HepG2 (cell line): ENCODE measurements at regions of chr3 and their contacts with region 1.

Region 1: DNA sequence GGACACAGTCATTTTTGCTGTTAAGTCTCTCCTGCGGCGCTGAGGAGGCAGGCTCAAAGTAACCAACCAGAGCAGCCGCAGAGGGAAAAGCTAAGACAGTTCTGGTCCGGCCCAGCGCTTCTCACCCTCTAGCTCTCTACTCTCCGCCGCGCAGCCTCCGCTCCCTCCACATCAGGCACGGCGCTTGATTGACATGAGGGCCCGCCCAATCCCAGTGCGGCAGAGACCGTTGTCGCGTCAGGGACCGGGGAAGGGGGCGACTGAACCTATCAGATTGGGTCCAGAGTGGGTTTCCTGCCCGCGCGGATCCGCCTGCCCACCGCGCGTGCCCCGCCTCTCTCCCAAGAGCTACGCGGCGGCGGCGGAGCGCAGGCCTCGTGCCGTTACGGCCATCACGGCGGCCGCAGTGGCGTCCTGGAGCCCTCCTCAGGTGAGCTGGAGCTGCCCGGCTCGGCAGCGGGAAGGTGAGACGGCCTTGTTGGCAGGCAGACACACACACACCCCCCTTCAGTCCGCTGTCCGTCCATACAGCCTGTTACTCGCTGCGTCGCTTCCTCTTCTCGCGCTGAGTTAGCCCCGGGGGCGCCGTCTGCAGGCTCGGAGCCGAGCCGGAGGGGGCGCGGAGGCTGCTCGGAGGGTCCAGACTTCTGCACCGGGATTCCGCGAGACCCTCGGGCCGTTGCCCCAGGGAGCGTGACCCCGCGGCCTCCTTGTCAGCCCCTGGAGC is at the start of gene NCK1:
- DNase-seq: peak; percentile 95
- ATAC-seq: peak; percentile 97
- H3K4me3 ChIP-seq: peak within 1 kb of the TSS; percentile 79 to 88 (median 87)
- H3K27ac ChIP-seq: peak within 1 kb of the TSS; percentile 90
- H3K4me1 ChIP-seq: peaks cover 29% of the 10 kb centered on the region
- H3K27me3 ChIP-seq: no peaks in the 10 kb centered on the region; a peak in 1 of 5 replicates
- CTCF ChIP-seq: peak; percentile 52
- EP300 ChIP-seq: no peak
- POLR2A ChIP-seq: peak; percentile 91 to 97
- RAD21 ChIP-seq: no peak
- total RNA-seq, gene NCK1: 30.4 and 51.0 TPM in 2 replicates

Region 2: GRCh38 chr3:136690599-136690998 is 171.5 kb before region 1 on chr3:
- CTCF ChIA-PET with region 1: no interaction called
- POLR2A ChIA-PET with region 1: no interaction called
- in situ Hi-C with region 1: no loop called
- intact Hi-C with region 1: no loop called
- DNase-seq: no peak
- ATAC-seq: no peak
- H3K4me3 ChIP-seq: no peak overlapping the region
- H3K27ac ChIP-seq: no peak overlapping the region
- H3K4me1 ChIP-seq: peaks cover 43% of the 10 kb centered on the region
- H3K27me3 ChIP-seq: no peaks in the 10 kb centered on the region
- CTCF ChIP-seq: no peak
- EP300 ChIP-seq: no peak
- POLR2A ChIP-seq: no peak
- RAD21 ChIP-seq: no peak

Region 3: DNA sequence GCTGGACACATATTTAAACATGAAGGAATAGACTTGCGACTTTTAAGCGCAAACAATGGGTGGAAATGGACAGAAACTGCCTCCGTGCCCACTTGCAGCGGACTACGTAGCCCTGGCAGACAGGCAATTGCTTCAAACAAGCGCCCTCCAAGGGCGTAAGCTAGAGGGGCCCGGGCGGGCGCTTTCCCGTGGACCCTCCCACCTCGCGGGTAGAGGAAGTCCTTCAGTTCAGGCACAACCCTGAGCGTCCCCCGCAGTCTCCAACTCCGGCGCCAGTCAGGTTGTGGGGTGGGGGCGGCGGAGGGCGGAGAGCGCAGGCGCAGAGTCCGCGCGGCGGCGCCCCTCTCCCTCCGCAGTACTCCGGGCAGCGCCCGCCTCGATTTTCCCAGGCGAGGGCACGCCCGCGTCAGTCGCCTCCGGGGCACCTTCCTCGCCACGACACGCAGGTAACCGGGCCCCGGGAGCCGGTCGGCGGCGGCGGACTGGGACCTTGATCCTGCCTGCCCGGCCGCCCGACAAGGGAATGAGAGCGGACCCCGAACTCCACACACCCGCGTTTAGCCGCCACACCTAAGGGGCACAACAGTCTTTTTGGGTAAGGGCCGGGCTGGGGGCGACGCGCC is 43.2 kb before region 1 on chr3 and contains the start of gene SLC35G2:
- CTCF ChIA-PET with region 1: no interaction called
- POLR2A ChIA-PET with region 1: interaction called, 7 read pairs
- in situ Hi-C with region 1: no loop called
- intact Hi-C with region 1: loop called (anchors 1 kb)
- DNase-seq: peak; percentile 55
- ATAC-seq: peak; percentile 83
- H3K4me3 ChIP-seq: peak within 1 kb of the TSS; percentile 72 to 81 (median 77)
- H3K27ac ChIP-seq: peak within 1 kb of the TSS; percentile 71
- H3K4me1 ChIP-seq: peaks cover 31% of the 10 kb centered on the region
- H3K27me3 ChIP-seq: no peaks in the 10 kb centered on the region
- CTCF ChIP-seq: peak; percentile 39
- EP300 ChIP-seq: no peak
- POLR2A ChIP-seq: peak in 1 of 2 experiments; percentile 57; a peak in 2 of 4 replicates
- RAD21 ChIP-seq: no peak
- total RNA-seq, gene SLC35G2: 4.2 and 7.6 TPM in 2 replicates

Region 4: DNA sequence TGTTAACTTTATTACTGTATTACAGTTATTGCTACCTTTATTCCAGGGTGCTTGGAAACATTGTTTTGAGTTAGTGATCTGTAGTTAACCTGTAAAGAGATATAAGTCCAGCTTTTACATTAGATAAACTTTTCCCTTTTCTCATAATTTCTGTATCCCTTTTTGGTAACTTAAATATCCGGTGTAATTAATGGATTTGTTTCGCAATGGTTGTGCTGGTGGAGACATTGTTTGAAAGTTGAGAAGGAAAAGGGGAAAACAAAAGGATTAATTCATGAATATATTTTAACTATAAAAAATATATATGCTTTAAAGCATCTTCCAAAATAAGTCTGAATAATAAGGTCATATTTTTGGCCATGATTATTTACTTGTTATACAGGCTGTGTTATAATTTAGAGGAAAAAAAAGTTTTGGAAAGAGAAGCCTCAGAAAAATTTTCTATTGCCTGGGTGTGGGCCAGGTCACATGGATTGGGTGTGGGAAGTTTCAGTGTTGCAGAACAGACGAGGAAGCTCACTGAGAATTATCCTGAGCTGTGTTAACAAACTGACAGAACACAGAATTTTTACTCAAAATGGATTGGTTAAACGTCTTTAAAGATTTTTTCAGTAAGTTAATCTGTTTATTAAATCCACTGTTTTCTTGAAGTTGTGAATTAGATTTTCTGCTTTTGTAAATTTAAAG is 68.1 kb after region 1 on chr3:
- CTCF ChIA-PET with region 1: no interaction called
- POLR2A ChIA-PET with region 1: no interaction called
- in situ Hi-C with region 1: no loop called
- intact Hi-C with region 1: no loop called
- DNase-seq: no peak
- ATAC-seq: no peak
- H3K4me3 ChIP-seq: no peak overlapping the region
- H3K27ac ChIP-seq: no peak overlapping the region
- H3K4me1 ChIP-seq: no peaks in the 10 kb centered on the region
- H3K27me3 ChIP-seq: no peaks in the 10 kb centered on the region
- CTCF ChIP-seq: no peak
- EP300 ChIP-seq: no peak
- POLR2A ChIP-seq: no peak
- RAD21 ChIP-seq: no peak

Region 5: GRCh38 chr3:136949708-136950107 is 87.7 kb after region 1 on chr3:
- CTCF ChIA-PET with region 1: no interaction called
- POLR2A ChIA-PET with region 1: interaction called, 4 read pairs
- in situ Hi-C with region 1: no loop called
- intact Hi-C with region 1: loop called (anchors 5 kb)
- DNase-seq: no peak
- ATAC-seq: no peak
- H3K4me3 ChIP-seq: no peak overlapping the region
- H3K27ac ChIP-seq: no peak overlapping the region
- H3K4me1 ChIP-seq: peaks cover 25% of the 10 kb centered on the region
- H3K27me3 ChIP-seq: no peaks in the 10 kb centered on the region; a peak in 1 of 5 replicates
- CTCF ChIP-seq: no peak
- EP300 ChIP-seq: no peak
- POLR2A ChIP-seq: no peak
- RAD21 ChIP-seq: no peak

Region 6: GRCh38 chr3:136955813-136956212 is 93.8 kb after region 1 on chr3:
- CTCF ChIA-PET with region 1: no interaction called
- POLR2A ChIA-PET with region 1: interaction called, 18 read pairs
- in situ Hi-C with region 1: no loop called
- intact Hi-C with region 1: loop called (anchors 5 kb)
- DNase-seq: peak; percentile 81
- ATAC-seq: peak; percentile 92
- H3K4me3 ChIP-seq: peak overlapping the region in 1 of 3 experiments; percentile 7; a peak in 1 of 6 replicates
- H3K27ac ChIP-seq: peak overlapping the region; percentile 41
- H3K4me1 ChIP-seq: peaks cover 38% of the 10 kb centered on the region
- H3K27me3 ChIP-seq: no peaks in the 10 kb centered on the region
- CTCF ChIP-seq: no peak
- EP300 ChIP-seq: peak in 1 of 2 experiments; percentile 43; a peak in 1 of 4 replicates
- POLR2A ChIP-seq: no peak
- RAD21 ChIP-seq: no peak

Region 7: DNA sequence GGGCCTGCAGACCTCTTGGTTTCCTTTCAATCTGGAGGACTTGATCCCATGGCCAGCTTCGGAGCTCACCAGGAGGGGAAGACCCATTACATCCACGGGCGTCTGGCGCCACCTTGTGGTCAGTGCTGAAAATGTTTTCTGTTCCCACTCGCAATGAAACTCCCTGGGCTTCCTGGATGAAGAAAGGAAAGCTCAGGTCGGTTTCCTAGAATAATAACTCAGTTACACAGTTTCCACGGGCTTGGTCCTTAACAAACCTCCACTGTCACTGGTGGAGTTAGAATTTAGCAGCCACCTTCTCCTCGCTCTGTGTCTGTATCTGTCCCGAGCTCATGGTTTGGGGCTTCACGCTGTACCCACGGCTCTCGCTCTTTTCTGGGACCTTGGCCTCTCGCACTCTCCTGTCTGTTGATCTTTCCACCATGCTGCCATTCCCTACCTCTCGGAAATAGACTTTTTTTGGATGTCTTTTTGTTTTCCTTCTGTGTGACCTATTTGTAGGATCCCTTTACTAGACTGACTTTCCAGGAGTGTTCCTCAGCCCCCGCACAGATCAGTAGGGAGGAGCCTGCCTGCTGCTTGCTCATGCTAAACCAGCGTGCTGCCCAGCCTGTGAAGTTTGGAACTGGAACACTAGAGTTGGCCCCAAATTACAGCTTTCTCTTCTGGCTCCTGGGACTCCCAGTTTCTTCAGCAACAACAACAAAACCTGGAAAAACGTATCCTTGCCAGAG is 152.1 kb after region 1 on chr3:
- CTCF ChIA-PET with region 1: no interaction called
- POLR2A ChIA-PET with region 1: interaction called, 11 read pairs
- in situ Hi-C with region 1: no loop called
- intact Hi-C with region 1: loop called (anchors 2 kb)
- DNase-seq: peak; percentile 82
- ATAC-seq: peak; percentile 94
- H3K4me3 ChIP-seq: peak overlapping the region; percentile 54 to 86 (median 73)
- H3K27ac ChIP-seq: peak overlapping the region; percentile 63
- H3K4me1 ChIP-seq: peaks cover 16% of the 10 kb centered on the region
- H3K27me3 ChIP-seq: no peaks in the 10 kb centered on the region; a peak in 1 of 5 replicates
- CTCF ChIP-seq: peak; percentile 94
- EP300 ChIP-seq: no peak
- POLR2A ChIP-seq: no peak; a peak in 1 of 4 replicates
- RAD21 ChIP-seq: peak; percentile 94

Region 8: GRCh38 chr3:137409584-137409983 is 547.5 kb after region 1 on chr3:
- CTCF ChIA-PET with region 1: no interaction called
- POLR2A ChIA-PET with region 1: no interaction called
- in situ Hi-C with region 1: no loop called
- intact Hi-C with region 1: no loop called
- DNase-seq: no peak
- ATAC-seq: no peak
- H3K4me3 ChIP-seq: no peak overlapping the region
- H3K27ac ChIP-seq: no peak overlapping the region
- H3K4me1 ChIP-seq: no peaks in the 10 kb centered on the region
- H3K27me3 ChIP-seq: no peaks in the 10 kb centered on the region
- CTCF ChIP-seq: no peak
- EP300 ChIP-seq: no peak
- POLR2A ChIP-seq: no peak
- RAD21 ChIP-seq: no peak